Motor neuron (in vitro differentiated cells): ENCODE measurements at regions of chr12 and their contacts with region 1.

Region 1: DNA sequence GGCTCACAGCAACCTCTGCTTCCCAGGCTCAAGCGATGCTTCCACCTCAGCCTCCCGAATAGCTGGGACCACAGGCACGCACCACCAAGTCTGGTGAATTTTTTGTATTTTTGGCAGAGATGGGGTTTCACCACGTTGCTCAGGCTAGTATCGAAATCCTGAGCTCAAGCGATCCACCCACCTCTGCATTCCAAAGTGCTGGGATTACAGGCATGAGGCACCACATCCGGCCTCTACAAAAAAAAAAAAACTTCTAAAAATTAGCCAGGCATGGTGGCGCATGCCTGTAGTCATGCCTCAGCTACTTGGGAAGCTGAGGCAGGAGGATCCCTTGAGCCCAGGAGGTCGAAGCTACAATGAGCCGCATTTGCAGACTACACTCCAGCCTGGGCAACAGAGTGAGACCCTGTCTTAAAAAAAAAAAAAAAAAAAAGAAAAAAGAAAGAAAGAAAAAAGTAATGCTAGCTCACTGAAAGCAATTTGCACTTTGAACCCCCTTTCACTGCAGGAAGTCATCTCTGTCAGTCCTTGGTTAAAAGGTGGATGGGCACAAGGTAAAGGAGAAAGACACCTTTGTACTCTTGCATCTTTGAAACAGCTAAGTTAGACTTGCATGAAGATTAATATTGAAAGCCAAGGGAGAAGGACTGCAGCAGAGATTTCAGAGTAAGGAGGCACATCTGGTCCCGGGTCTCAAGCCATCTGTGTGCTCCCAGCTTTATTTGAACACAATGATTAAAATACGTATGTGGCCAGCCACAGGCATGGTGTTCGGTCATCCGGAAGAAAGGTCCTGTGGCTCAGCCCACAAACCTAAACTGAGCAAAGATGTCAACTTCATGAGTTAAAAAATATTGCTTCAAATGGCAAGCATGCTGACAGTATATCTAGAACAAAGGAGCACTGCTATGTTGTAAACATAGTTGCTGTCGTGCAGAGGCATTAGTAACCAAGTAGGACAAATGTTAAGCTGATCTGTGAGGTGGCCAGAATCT is 103.8 kb upstream of the HMGA2 start:
- ATAC-seq: peak in 3 of 8 experiments; percentile 24 to 79 (median 76)
- H3K4me3 ChIP-seq: no peak overlapping the region
- H3K27ac ChIP-seq: no peak overlapping the region
- H3K4me1 ChIP-seq: peaks cover 0 to 3% of the 10 kb centered on the region in 2 donors

Region 2: DNA sequence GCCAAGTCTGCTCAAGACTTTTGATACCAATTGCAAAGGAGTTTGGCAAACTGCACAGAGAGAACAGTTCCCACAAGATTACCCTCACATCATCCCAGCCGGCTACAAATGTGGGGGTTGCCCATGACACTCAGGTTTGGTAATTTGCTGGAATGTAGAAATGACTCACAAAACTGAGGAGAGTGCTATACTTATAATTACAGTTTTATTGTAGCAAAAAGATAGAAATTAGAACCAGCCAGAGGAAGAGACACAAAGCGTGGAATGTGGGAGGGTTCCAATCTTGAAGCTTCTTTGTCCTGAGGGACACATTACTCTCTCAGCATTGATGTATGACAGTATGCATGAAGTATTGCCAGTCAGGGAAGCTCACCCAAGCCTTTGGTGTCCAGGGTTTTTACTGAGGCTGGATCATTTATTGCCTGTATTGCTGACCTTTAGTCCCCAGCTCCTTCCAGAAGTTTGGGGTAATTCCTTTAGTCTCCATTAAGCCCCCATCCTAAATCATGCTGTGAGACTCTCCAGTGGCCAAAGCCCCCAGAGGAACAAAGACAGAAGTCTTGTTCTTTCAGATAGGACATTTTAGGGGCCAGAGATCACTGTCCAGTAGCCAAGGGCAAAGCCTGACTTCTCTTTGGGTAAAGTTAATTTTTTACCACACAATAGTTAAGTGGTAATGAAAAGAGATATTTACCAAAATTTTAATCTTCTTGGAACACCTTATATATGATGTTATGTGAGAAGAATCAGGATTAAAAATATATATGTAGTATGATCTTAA is 1258.6 kb before region 1 on chr12:
- in situ Hi-C with region 1: no loop called
- ATAC-seq: peak in 7 of 8 experiments; percentile 32 to 80 (median 62)
- H3K4me3 ChIP-seq: no peak overlapping the region
- H3K27ac ChIP-seq: no peak overlapping the region
- H3K4me1 ChIP-seq: peaks cover 5% of the 10 kb centered on the region in 2 donors

Region 3: GRCh38 chr12:65602610-65603295 is 117.7 kb before region 1 on chr12:
- in situ Hi-C with region 1: no loop called
- ATAC-seq: peak; percentile 71 to 100 (median 92)
- H3K4me3 ChIP-seq: no peak overlapping the region
- H3K27ac ChIP-seq: no peak overlapping the region
- H3K4me1 ChIP-seq: no peaks in the 10 kb centered on the region

Region 4: GRCh38 chr12:66107451-66107915 is 387.1 kb after region 1 on chr12:
- in situ Hi-C with region 1: loop called in 1 of 9 experiments (anchors 25 kb)
- ATAC-seq: peak in 7 of 8 experiments; percentile 28 to 87 (median 76)
- H3K4me3 ChIP-seq: no peak overlapping the region
- H3K27ac ChIP-seq: no peak overlapping the region
- H3K4me1 ChIP-seq: no peaks in the 10 kb centered on the region